ENCODE measurements at regions of chr1 and their contacts with region 1.

Region 1: DNA sequence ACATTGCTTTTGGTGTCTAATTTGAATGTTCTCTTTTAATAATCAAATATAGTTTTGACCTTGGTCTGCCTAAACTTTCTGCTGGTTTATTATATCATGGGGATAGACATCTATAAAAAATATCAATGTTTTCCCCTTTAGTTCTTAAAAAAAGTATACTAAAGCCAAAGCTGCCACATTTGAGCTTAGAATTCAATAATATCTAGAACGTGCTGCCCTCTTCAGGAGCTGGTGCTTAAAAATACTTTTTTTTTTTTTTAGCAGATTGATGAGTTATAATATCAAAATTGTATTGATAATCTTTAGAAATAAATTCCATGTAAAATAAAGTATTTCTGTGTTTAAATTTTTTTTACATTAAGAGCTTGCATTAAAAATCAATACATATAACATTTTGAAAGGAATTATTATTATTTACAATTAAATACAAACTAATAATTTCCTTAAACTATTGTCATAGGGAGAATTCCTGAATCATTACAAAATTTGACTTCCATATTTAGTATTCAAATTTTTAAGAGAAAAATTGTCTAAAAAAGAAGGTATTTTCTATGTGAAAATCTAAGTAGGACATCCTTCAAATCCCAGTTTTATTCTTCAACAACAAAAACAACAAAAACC is 40.1 kb upstream of the ADGRL2 start:
- DNase-seq: no peak
- ATAC-seq: no peak

Region 2: GRCh38 chr1:81549604-81550127 is 210.9 kb before region 1 on chr1:
- intact Hi-C with region 1: loop called in 1 of 2 experiments (anchors 10 kb)
- DNase-seq: no peak
- ATAC-seq: peak; percentile 53 to 69